ENCODE measurements at regions of chr22 and their contacts with region 1.

Region 1: DNA sequence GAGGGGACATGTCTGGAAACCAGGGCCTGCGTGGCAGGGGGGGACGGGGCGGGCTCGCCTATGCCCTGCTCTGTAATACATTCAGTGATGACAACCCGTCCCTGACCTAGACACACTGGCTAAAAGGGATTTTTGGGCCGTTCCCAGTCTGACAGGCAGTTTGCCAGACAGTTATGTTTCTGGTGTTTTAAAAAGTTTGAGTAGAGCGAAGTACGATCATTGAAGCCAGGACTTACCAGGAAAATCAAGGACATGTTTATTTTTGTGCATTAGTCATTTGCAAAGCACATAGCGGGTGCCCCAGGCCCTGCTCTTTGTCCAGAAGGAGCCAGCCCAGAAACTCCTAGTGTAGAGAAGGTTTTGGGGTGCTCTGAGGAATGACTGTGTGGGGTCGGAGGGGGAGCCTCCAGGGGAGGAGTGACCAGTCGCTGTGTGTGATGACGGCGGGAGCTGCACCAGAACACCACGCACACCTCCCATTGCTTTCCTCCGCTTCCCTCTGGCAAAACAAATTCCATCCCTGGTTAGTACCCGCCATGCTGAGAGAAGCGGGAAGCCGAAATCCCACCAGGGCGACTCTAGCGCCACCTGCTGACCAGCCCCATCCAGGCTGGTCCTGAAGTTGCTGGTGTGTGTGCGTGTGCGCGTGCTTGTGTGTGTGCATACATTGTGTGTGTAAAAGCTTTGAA is 50.8 kb downstream of the FBLN1 start:
- DNase-seq: peak; percentile 75 to 80 (median 78)
- H3K4me3 ChIP-seq: no peak overlapping the region
- H3K27ac ChIP-seq: no peak overlapping the region
- H3K4me1 ChIP-seq: no peaks in the 10 kb centered on the region
- H3K27me3 ChIP-seq: no peaks in the 10 kb centered on the region

Region 2: GRCh38 chr22:45358127-45358526 is 195.4 kb before region 1 on chr22:
- CTCF ChIA-PET with region 1: no interaction called
- POLR2A ChIA-PET with region 1: no interaction called
- DNase-seq: no peak
- H3K4me3 ChIP-seq: no peak overlapping the region
- H3K27ac ChIP-seq: no peak overlapping the region
- H3K4me1 ChIP-seq: peaks cover 0 to 12% (median 5%) of the 10 kb centered on the region in 4 experiments
- H3K27me3 ChIP-seq: no peaks in the 10 kb centered on the region

Region 3: GRCh38 chr22:45564349-45565032 is 11.0 kb after region 1 on chr22:
- CTCF ChIA-PET with region 1: interaction called, 13 read pairs
- POLR2A ChIA-PET with region 1: no interaction called
- DNase-seq: no peak
- H3K4me3 ChIP-seq: no peak overlapping the region
- H3K27ac ChIP-seq: no peak overlapping the region
- H3K4me1 ChIP-seq: no peaks in the 10 kb centered on the region
- H3K27me3 ChIP-seq: peaks cover 0 to 14% (median 0%) of the 10 kb centered on the region in 5 experiments